Left cardiac atrium (tissue), 4 donors: ENCODE measurements at regions of chrX and their contacts with region 1.

Region 1: GRCh38 chrX:38192007-38192810 is 28.5 kb downstream of the SRPX start:
- DNase-seq: no peak
- ATAC-seq: peak in 1 of 2 donors; percentile 50

Region 2: GRCh38 chrX:38236901-38237615 is 44.8 kb after region 1 on chrX:
- intact Hi-C with region 1: no loop called
- DNase-seq: no peak
- ATAC-seq: no peak

Region 3: GRCh38 chrX:38282044-38282443 is 89.8 kb after region 1 on chrX:
- intact Hi-C with region 1: loop called in 1 of 2 experiments (anchors 2 kb)
- DNase-seq: no peak
- ATAC-seq: peak in 1 of 2 donors; percentile 74

Region 4: GRCh38 chrX:38347136-38347535 is 154.9 kb after region 1 on chrX:
- intact Hi-C with region 1: no loop called
- DNase-seq: no peak
- ATAC-seq: peak; percentile 44 to 66